Dendritic cell treated with granulocyte-macrophage colony-stimulating factor and Interleukin-4, amounts not matched to agents 40 ng/mL and 50 ng/mL, for 4 days (primary cell): ENCODE measurements at regions of chr10 and their contacts with region 1.

Region 1: GRCh38 chr10:96513698-96514561 is at the start of gene TLL2:
- H3K4me3 Mint-ChIP-seq: peak within 1 kb of the TSS; percentile 76
- H3K27ac Mint-ChIP-seq: no peak within 1 kb of the TSS
- H3K4me1 Mint-ChIP-seq: peaks cover 28% of the 10 kb centered on the region
- H3K27me3 Mint-ChIP-seq: peaks cover 70% of the 10 kb centered on the region

Region 2: GRCh38 chr10:96374985-96375830 is 138.7 kb before region 1 on chr10:
- intact Hi-C with region 1: loop called (anchors 5 kb)
- H3K4me3 Mint-ChIP-seq: peak overlapping the region; percentile 73
- H3K27ac Mint-ChIP-seq: no peak overlapping the region
- H3K4me1 Mint-ChIP-seq: peaks cover 14% of the 10 kb centered on the region
- H3K27me3 Mint-ChIP-seq: peaks cover 23% of the 10 kb centered on the region

Region 3: DNA sequence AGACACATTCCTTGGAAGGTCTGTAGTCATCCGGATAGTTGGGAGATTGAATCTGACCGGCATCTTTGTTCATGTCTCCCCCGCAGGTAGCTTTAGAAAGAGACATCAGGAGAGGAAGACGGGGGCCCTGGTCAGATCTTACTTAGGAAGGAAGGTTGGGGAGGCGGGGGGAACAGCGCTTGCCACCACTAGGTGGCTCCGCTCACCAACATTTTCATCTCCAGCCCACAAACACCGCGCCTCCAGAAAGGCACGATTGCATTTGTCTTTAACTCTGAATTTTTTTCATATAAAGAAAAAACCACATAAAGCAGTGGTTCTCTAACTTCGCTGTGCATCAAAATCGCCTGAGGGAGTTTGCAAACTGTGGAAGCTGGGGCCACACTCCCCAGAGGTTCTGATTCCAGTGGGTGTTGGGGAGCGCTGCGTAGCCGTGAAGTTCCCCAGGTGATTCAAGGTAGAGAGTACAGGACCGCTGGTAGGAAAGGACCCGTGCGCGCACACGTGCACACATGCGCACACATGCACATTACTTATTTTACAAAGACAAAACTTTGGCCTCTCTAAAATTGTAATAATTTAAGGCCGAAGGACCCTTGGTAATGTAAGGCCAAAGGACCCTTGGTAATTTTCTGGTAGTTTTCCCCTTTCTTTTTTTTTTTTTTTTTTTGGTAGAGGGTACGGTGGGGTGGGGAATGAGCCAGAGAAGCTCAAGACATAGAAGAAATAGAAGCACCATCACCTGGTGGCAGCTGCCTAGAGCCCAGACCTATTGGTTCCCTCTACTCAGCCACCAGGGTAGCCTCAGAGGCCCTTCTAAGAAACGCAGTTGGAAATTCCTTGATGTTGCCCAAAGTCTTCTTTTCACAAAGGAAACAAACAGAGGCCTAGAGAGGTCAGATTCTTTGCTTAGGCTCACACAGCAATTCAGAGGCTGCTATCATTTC is 117.7 kb before region 1 on chr10:
- intact Hi-C with region 1: loop called (anchors 2 kb)
- H3K4me3 Mint-ChIP-seq: no peak overlapping the region
- H3K27ac Mint-ChIP-seq: no peak overlapping the region
- H3K4me1 Mint-ChIP-seq: peaks cover 1% of the 10 kb centered on the region
- H3K27me3 Mint-ChIP-seq: peaks cover 46% of the 10 kb centered on the region

Region 4: GRCh38 chr10:96570983-96571964 is 57.3 kb after region 1 on chr10:
- intact Hi-C with region 1: no loop called
- H3K4me3 Mint-ChIP-seq: no peak overlapping the region
- H3K27ac Mint-ChIP-seq: no peak overlapping the region
- H3K4me1 Mint-ChIP-seq: peaks cover 35% of the 10 kb centered on the region
- H3K27me3 Mint-ChIP-seq: no peaks in the 10 kb centered on the region